Activated CD4-positive, alpha-beta T cell treated with anti-CD3 and anti-CD28 coated beads, Interleukin-2, amount 10 ng/mL, durations not matched to agents 7 days and 5 days (primary cell): ENCODE measurements at regions of chr3 and their contacts with region 1.

Region 1: DNA sequence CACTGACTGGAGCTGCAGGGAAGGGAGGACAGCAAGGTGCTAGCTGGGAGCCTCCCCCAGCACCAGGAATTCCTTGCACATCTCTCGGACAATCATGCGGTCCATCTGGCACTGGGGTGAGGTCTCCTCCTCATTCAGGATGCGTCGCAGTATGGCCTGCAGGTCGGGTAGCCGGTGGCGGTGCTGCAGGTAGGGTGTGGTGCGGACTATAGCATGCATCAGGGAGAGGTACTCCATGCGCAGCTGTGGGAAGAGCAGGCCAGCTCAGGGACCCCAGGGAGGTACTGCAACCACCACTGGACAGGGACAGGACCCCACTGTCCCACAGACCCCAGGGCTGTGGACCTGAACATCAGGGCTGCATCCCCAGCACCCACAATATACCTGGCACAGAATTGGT is 11.2 kb downstream of the NCKIPSD start:
- DNase-seq: no peak
- H3K4me3 Mint-ChIP-seq: no peak overlapping the region
- H3K27ac Mint-ChIP-seq: no peak overlapping the region
- H3K4me1 Mint-ChIP-seq: peaks cover 12% of the 10 kb centered on the region
- H3K27me3 Mint-ChIP-seq: no peaks in the 10 kb centered on the region

Region 2: GRCh38 chr3:48663415-48664312 is 10.8 kb before region 1 on chr3:
- CTCF ChIA-PET with region 1: interaction called, 17 read pairs
- POLR2A ChIA-PET with region 1: no interaction called
- DNase-seq: peak; percentile 92
- H3K4me3 Mint-ChIP-seq: peak overlapping the region; percentile 78
- H3K27ac Mint-ChIP-seq: peak overlapping the region; percentile 82
- H3K4me1 Mint-ChIP-seq: peaks cover 22% of the 10 kb centered on the region
- H3K27me3 Mint-ChIP-seq: peaks cover 10% of the 10 kb centered on the region